Activated T-helper 1 cell treated with anti-CD3 and anti-CD28 coated beads, Interleukin-12 subunit alpha, Interleukin-12 subunit beta, Interleukin-2, Interleukin-4 antibody, amounts not matched to agents 30 ng/mL and 10 ng/mL and 1 ng/mL, durations not matched to agents 14 hours and 24 hours and 36 hours (primary cell): ENCODE measurements at regions of chr12 and their contacts with region 1.

Region 1: GRCh38 chr12:89542912-89543592 is 17.2 kb upstream of the POC1B start:
- DNase-seq: peak; percentile 43
- H3K4me3 Mint-ChIP-seq: no peak overlapping the region
- H3K27ac Mint-ChIP-seq: no peak overlapping the region
- H3K4me1 Mint-ChIP-seq: peaks cover 10% of the 10 kb centered on the region
- H3K27me3 Mint-ChIP-seq: no peaks in the 10 kb centered on the region

Region 2: GRCh38 chr12:88935856-88936255 is 607.2 kb before region 1 on chr12:
- intact Hi-C with region 1: no loop called
- DNase-seq: no peak
- H3K4me3 Mint-ChIP-seq: no peak overlapping the region
- H3K27ac Mint-ChIP-seq: no peak overlapping the region
- H3K4me1 Mint-ChIP-seq: no peaks in the 10 kb centered on the region
- H3K27me3 Mint-ChIP-seq: no peaks in the 10 kb centered on the region

Region 3: DNA sequence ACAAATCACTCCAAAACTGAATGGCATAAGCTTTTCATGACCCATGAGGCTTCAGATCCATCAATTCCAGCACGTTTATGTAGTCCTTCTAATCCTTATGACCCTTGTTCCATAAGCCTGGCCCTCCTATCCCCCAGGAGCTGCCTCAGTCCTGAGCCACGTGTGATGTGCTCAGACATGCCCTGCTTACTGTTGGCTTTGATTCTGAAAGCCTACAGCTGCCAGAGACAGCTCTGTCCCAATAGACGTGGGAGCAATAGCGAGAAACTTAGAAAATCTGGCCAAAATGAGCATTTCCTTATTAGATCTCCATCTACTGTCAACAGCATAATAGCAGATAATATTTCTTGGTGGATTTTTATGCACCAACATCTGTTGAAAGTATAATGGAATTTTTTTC is 223.9 kb before region 1 on chr12:
- intact Hi-C with region 1: no loop called
- DNase-seq: no peak
- H3K4me3 Mint-ChIP-seq: no peak overlapping the region
- H3K27ac Mint-ChIP-seq: no peak overlapping the region
- H3K4me1 Mint-ChIP-seq: peaks cover 26% of the 10 kb centered on the region
- H3K27me3 Mint-ChIP-seq: no peaks in the 10 kb centered on the region

Region 4: DNA sequence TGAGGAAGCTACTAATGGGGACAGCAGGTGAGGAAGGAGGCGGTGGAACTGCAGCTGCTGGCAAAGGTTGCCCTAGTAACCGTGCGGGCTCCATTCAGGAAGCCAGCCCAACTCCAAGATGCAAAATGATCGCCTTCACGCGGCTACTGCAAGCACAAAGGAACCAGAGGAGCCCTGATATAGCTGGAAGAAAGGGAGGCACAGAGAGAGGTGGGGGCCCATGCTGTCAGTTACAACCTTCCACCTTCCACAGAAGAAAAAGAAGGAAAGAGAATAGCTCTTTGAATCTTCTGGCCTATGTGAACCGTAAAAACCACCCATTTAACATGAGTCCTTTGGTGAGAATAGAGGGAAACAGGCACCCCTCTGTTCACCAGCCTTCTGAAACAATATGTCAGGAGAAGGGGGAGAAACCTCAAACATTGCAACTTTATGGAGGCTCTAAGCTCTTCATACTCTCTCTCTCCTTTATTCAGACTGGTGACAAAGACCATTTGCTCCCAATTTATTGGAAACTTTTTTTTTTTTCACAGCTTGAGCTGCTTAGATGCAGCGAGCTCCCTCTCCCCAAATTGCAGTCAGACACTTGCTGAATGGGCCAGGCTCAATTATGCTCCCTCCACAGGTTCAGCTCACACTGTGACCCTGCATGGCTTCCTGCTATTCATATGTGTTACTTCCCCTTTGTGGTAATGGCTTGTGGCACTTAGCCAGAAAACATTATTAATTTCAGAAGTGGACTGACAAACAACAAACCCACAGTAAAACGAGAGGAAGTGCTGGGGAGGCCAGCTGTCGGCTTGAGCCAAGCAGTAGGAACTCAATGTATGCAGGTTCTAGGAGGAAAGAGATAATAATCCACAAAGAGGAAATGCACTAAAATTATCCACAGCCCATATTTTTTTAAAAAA is 197.0 kb before region 1 on chr12:
- intact Hi-C with region 1: no loop called
- DNase-seq: peak; percentile 53
- H3K4me3 Mint-ChIP-seq: peak overlapping the region; percentile 80
- H3K27ac Mint-ChIP-seq: peak overlapping the region; percentile 88
- H3K4me1 Mint-ChIP-seq: peaks cover 70% of the 10 kb centered on the region
- H3K27me3 Mint-ChIP-seq: no peaks in the 10 kb centered on the region

Region 5: GRCh38 chr12:89960011-89960507 is 417.0 kb after region 1 on chr12:
- intact Hi-C with region 1: loop called (anchors 5 kb)
- DNase-seq: peak; percentile 18
- H3K4me3 Mint-ChIP-seq: no peak overlapping the region
- H3K27ac Mint-ChIP-seq: no peak overlapping the region
- H3K4me1 Mint-ChIP-seq: peaks cover 20% of the 10 kb centered on the region
- H3K27me3 Mint-ChIP-seq: peaks cover 17% of the 10 kb centered on the region

Region 6: DNA sequence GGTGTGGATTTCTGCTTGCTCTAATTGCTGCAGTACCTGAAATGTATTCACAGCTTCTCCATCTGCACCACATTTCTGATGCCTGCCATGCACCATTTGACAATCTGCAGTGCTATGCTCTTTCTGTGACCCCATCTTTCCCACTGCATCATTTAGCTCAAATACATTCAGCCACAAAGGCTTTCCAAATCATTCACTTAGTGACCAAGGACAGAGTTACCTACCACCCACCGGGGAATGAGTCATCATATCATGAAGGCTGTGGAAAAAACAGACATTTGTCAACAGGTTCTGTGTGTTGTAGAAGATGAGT is 631.1 kb after region 1 on chr12:
- intact Hi-C with region 1: loop called (anchors 10 kb)
- DNase-seq: no peak
- H3K4me3 Mint-ChIP-seq: no peak overlapping the region
- H3K27ac Mint-ChIP-seq: no peak overlapping the region
- H3K4me1 Mint-ChIP-seq: peaks cover 9% of the 10 kb centered on the region
- H3K27me3 Mint-ChIP-seq: peaks cover 3% of the 10 kb centered on the region

Region 7: GRCh38 chr12:90854136-90854689 is 1311.2 kb after region 1 on chr12:
- intact Hi-C with region 1: loop called (anchors 2 kb)
- DNase-seq: no peak
- H3K4me3 Mint-ChIP-seq: no peak overlapping the region
- H3K27ac Mint-ChIP-seq: no peak overlapping the region
- H3K4me1 Mint-ChIP-seq: no peaks in the 10 kb centered on the region
- H3K27me3 Mint-ChIP-seq: peaks cover 2% of the 10 kb centered on the region

Region 8: DNA sequence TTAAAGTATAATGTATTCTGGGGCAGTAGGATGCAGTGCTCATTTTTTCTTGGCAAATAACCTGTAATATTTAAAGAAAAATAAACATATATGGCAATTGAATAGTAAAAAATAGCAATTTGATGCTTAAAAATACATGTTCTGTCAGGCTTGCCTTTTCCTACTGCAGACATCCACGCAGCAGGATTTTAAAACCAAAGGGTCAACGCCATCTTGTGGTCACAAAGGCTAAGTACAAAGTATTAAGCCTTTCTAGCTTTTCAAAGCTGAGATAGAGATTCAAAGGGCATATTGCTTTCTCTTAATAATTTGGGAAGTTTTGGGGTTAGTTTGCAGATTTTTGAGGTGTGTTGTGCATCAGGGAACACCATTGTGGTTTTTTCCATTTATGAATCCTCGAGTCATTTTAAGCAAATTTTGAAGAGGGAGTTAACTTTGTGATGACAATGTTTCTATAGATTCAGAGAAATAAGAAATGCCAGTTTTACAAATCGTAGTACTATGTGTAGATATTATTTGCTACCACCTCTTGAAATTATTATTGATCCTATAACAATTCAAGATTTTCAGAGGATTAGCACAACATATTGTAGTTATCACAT is 1416.6 kb after region 1 on chr12:
- intact Hi-C with region 1: loop called (anchors 1 kb)
- DNase-seq: no peak
- H3K4me3 Mint-ChIP-seq: no peak overlapping the region
- H3K27ac Mint-ChIP-seq: no peak overlapping the region
- H3K4me1 Mint-ChIP-seq: no peaks in the 10 kb centered on the region
- H3K27me3 Mint-ChIP-seq: no peaks in the 10 kb centered on the region